Activated naive CD4-positive, alpha-beta T cell treated with anti-CD3 and anti-CD28 coated beads for 36 hours (primary cell): ENCODE measurements at regions of chr19 and their contacts with region 1.

Region 1: GRCh38 chr19:44723952-44724319 is 24.6 kb upstream of the BCL3 start:
- DNase-seq: peak; percentile 88
- H3K4me3 Mint-ChIP-seq: no peak overlapping the region
- H3K27ac Mint-ChIP-seq: no peak overlapping the region
- H3K4me1 Mint-ChIP-seq: peaks cover 45% of the 10 kb centered on the region
- H3K27me3 Mint-ChIP-seq: no peaks in the 10 kb centered on the region

Region 2: GRCh38 chr19:44607049-44607448 is 116.9 kb before region 1 on chr19:
- CTCF ChIA-PET with region 1: no interaction called
- intact Hi-C with region 1: no loop called
- DNase-seq: no peak
- H3K4me3 Mint-ChIP-seq: no peak overlapping the region
- H3K27ac Mint-ChIP-seq: peak overlapping the region; percentile 0
- H3K4me1 Mint-ChIP-seq: peaks cover 16% of the 10 kb centered on the region
- H3K27me3 Mint-ChIP-seq: no peaks in the 10 kb centered on the region

Region 3: GRCh38 chr19:44626048-44626624 is 97.8 kb before region 1 on chr19:
- CTCF ChIA-PET with region 1: no interaction called
- intact Hi-C with region 1: no loop called
- DNase-seq: no peak
- H3K4me3 Mint-ChIP-seq: no peak overlapping the region
- H3K27ac Mint-ChIP-seq: no peak overlapping the region
- H3K4me1 Mint-ChIP-seq: no peaks in the 10 kb centered on the region
- H3K27me3 Mint-ChIP-seq: no peaks in the 10 kb centered on the region

Region 4: GRCh38 chr19:44689056-44689895 is 34.7 kb before region 1 on chr19:
- CTCF ChIA-PET with region 1: interaction called, 97 read pairs
- intact Hi-C with region 1: loop called (anchors 1 kb)
- DNase-seq: peak; percentile 86
- H3K4me3 Mint-ChIP-seq: no peak overlapping the region
- H3K27ac Mint-ChIP-seq: no peak overlapping the region
- H3K4me1 Mint-ChIP-seq: peaks cover 42% of the 10 kb centered on the region
- H3K27me3 Mint-ChIP-seq: peaks cover 6% of the 10 kb centered on the region

Region 5: GRCh38 chr19:44734986-44735385 is 11.1 kb after region 1 on chr19:
- CTCF ChIA-PET with region 1: interaction called, 19 read pairs
- intact Hi-C with region 1: no loop called
- DNase-seq: no peak
- H3K4me3 Mint-ChIP-seq: no peak overlapping the region
- H3K27ac Mint-ChIP-seq: no peak overlapping the region
- H3K4me1 Mint-ChIP-seq: no peaks in the 10 kb centered on the region
- H3K27me3 Mint-ChIP-seq: no peaks in the 10 kb centered on the region

Region 6: GRCh38 chr19:44752816-44753618 is 29.1 kb after region 1 on chr19:
- CTCF ChIA-PET with region 1: interaction called, 13 read pairs
- intact Hi-C with region 1: loop called (anchors 1 kb)
- DNase-seq: peak; percentile 98
- H3K4me3 Mint-ChIP-seq: peak overlapping the region; percentile 93
- H3K27ac Mint-ChIP-seq: peak overlapping the region; percentile 97
- H3K4me1 Mint-ChIP-seq: peaks cover 59% of the 10 kb centered on the region
- H3K27me3 Mint-ChIP-seq: no peaks in the 10 kb centered on the region

Region 7: DNA sequence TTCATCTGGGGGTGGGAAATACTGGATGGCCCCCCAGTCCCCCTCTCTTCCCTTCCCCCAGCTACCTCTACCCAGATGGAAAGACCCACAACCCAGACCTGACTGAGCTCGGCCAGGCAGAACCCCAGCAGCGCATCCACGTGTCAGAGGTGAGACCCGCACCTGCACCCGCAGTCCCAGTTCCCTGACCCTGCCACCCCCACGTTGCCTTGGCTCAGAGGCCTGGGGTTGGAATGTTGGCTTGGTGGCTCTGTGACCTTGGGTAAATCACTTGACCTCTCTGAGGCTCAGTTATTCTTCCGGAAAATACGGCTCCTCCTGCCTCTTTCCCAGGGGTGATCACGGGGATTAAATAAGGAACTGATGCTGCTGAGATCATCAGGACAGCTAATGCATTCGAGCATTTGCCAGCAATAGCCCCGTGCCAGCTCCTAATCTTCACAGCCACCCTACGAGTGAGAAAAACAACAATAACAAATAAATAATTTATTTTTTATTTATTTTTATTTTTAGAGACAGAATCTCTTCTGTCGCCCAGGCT is 66.1 kb after region 1 on chr19:
- CTCF ChIA-PET with region 1: interaction called, 21 read pairs
- intact Hi-C with region 1: no loop called
- DNase-seq: no peak
- H3K4me3 Mint-ChIP-seq: no peak overlapping the region
- H3K27ac Mint-ChIP-seq: no peak overlapping the region
- H3K4me1 Mint-ChIP-seq: no peaks in the 10 kb centered on the region
- H3K27me3 Mint-ChIP-seq: no peaks in the 10 kb centered on the region